ENCODE measurements at regions of chr16 and their contacts with region 1.

Region 1: DNA sequence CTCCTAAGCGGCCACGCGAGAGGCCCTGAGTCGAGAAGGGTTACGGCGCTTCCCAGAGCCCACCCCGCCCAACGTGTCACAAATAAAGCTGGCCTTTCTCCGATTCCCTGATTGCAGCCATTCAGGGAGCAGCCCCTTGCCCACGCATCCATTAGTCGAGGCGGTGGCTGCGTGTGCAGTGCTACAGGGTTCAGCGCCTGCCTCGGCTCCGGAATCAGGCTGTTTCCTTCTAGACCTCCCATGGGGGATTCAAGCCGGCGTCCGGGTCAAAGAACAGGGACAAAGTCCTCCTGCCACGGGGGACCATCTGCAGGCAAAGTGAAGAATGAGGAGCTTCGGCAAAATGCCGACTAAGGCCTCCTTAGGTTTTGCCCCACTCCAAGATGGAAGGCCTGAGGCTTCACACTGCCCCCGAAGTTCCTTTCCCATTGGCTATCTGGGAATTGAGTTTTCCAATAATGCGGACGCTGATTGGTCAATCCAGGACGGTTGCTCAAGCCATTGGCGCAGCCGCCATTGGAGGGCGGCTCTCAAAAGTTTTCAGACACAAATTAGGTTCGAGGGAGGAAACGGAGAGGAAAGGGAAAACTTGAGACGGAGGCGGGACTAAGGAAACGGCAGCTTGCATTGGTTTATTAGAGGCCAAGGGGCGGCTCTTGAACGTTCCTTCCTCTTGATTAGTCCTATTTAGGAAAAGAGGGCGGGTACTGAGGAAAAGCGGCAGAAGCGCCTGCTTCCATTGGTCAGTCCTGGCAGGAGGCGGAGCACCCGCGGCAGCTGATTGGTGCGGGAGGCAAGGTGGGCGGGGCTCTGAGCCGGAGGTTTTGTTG is 430 bp upstream of the KATNB1 start:
- DNase-seq: peak; percentile 88 to 100 (median 98)
- ATAC-seq: peak; percentile 96
- H3K4me3 ChIP-seq: peak overlapping the region; percentile 93
- H3K4me3 Mint-ChIP-seq: peak overlapping the region; percentile 90 to 99 (median 96)
- H3K27ac ChIP-seq: peak overlapping the region; percentile 80
- H3K27ac Mint-ChIP-seq: peak overlapping the region; percentile 81 to 98 (median 93)
- H3K4me1 ChIP-seq: peaks cover 12 to 14% of the 10 kb centered on the region in 2 donors
- H3K4me1 Mint-ChIP-seq: peaks cover 14 to 38% (median 26%) of the 10 kb centered on the region in 7 donors
- H3K27me3 ChIP-seq: no peaks in the 10 kb centered on the region
- H3K27me3 Mint-ChIP-seq: no peaks in the 10 kb centered on the region

Region 2: GRCh38 chr16:56425439-56425832 is 1309.7 kb before region 1 on chr16 and contains the start of gene AMFR:
- CTCF ChIA-PET with region 1: interaction called, 5 read pairs
- POLR2A ChIA-PET with region 1: no interaction called
- intact Hi-C with region 1: loop called in 1 of 2 experiments (anchors 10 kb)
- DNase-seq: peak; percentile 57 to 86 (median 68)
- ATAC-seq: peak; percentile 97
- H3K4me3 ChIP-seq: peak within 1 kb of the TSS; percentile 73
- H3K4me3 Mint-ChIP-seq: peak within 1 kb of the TSS; percentile 95 to 100 (median 98)
- H3K27ac ChIP-seq: peak within 1 kb of the TSS; percentile 82
- H3K27ac Mint-ChIP-seq: peak within 1 kb of the TSS; percentile 74 to 96 (median 94)
- H3K4me1 ChIP-seq: peaks cover 6 to 8% of the 10 kb centered on the region in 2 donors
- H3K4me1 Mint-ChIP-seq: peaks cover 32 to 45% (median 40%) of the 10 kb centered on the region in 7 donors
- H3K27me3 ChIP-seq: no peaks in the 10 kb centered on the region
- H3K27me3 Mint-ChIP-seq: no peaks in the 10 kb centered on the region
- total RNA-seq, gene AMFR: 45.5 to 83.3 (median 62.0) TPM

Region 3: GRCh38 chr16:56931892-56932720 is 803.0 kb before region 1 on chr16 and contains the start of gene HERPUD1:
- CTCF ChIA-PET with region 1: no interaction called
- POLR2A ChIA-PET with region 1: no interaction called
- intact Hi-C with region 1: loop called in 1 of 2 experiments (anchors 5 kb)
- DNase-seq: peak; percentile 96 to 99 (median 99)
- ATAC-seq: peak; percentile 96
- H3K4me3 ChIP-seq: peak within 1 kb of the TSS; percentile 94
- H3K4me3 Mint-ChIP-seq: peak within 1 kb of the TSS; percentile 97 to 99 (median 98)
- H3K27ac ChIP-seq: peak within 1 kb of the TSS; percentile 98
- H3K27ac Mint-ChIP-seq: peak within 1 kb of the TSS; percentile 96 to 99 (median 97)
- H3K4me1 ChIP-seq: peaks cover 13 to 18% of the 10 kb centered on the region in 2 donors
- H3K4me1 Mint-ChIP-seq: peaks cover 18 to 52% (median 38%) of the 10 kb centered on the region in 7 donors
- H3K27me3 ChIP-seq: no peaks in the 10 kb centered on the region
- H3K27me3 Mint-ChIP-seq: no peaks in the 10 kb centered on the region
- total RNA-seq, gene HERPUD1: 102 to 226 (median 131) TPM

Region 4: DNA sequence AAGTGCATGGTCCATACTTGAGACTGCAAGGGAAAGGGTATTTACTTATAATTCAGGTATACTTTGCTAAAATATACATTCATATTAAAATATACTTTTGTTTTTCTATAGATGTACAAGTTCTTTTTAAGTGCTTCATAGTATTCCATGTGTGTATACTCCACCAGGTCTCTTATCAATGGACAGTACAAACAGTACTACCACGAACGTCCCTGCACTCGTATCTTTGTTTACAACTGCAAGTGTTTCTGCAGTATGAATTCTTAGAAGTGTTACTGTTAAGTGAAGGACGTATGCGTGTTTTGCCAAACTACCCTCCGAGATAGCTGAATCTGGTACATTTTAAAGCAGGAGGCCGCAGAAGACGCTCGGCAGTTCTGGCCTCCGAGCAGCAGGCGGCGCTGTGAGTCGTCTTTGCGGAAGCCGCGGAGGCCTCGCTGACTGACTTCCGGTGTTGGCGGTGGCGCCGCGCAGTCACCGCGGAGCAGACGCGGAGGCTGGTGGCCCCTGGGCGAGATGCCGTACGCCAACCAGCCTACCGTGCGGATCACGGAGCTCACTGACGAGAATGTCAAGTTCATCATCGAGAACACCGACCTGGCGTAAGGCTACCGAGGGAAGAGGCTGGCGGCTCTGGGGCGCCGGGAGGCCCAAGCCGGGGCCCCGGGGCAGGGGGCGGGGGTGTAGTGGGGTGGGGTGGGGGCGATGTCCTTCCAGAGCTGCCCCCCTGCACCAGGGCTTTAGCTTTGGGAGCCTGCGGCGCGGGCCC is 272.7 kb before region 1 on chr16 and contains the start of gene POLR2C:
- CTCF ChIA-PET with region 1: no interaction called
- POLR2A ChIA-PET with region 1: no interaction called
- intact Hi-C with region 1: loop called in 1 of 2 experiments (anchors 1 kb)
- DNase-seq: peak; percentile 84 to 96 (median 92)
- ATAC-seq: peak; percentile 99
- H3K4me3 ChIP-seq: peak within 1 kb of the TSS; percentile 86
- H3K4me3 Mint-ChIP-seq: peak within 1 kb of the TSS; percentile 79 to 100 (median 98)
- H3K27ac ChIP-seq: peak within 1 kb of the TSS; percentile 77
- H3K27ac Mint-ChIP-seq: peak within 1 kb of the TSS; percentile 93 to 100 (median 99)
- H3K4me1 ChIP-seq: peaks cover 17 to 23% of the 10 kb centered on the region in 2 donors
- H3K4me1 Mint-ChIP-seq: peaks cover 19 to 45% (median 35%) of the 10 kb centered on the region in 7 donors
- H3K27me3 ChIP-seq: no peaks in the 10 kb centered on the region
- H3K27me3 Mint-ChIP-seq: no peaks in the 10 kb centered on the region
- total RNA-seq, gene POLR2C: 63.4 to 96.3 (median 81.4) TPM

Region 5: DNA sequence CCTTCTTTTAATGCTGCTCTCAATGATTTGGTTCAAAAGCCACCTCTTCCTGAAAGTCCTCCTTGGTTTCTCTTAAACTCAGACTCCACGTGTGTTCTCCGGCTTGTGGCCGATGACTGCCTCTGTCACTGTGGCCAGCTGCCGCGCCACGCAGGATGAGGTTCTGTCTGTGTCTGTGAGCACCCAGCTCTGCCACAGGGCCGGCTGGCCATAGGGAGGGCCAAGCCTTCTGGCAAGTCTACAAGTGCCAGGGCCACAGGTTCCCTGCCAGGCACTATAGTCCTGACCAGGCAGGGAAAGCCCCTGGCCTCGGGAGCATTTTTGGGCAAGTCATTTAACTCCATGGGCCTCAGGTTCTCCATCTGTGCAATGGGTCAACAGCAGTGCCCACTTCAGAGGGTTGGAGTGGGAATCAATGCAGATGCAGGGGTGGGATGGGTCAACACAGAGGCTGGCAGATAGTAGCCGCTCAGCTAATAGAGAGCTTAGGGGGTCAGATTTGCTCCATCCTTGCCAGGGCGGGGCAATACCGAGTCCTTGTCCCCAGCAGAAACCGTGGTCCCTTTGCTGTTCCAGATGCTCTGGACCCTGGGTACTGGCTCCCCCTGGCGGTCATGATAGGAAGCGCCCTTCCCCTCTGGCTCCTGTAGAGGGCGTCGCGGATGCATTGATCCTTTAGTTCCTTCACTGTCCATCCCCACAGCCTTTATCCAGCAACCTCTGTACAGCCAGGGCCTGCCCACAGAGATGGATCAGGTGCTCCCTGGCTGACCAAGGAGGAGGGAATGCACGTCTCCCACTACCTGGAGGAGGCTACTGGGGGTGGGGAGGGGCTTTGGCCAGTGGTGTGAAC is 86.3 kb before region 1 on chr16:
- CTCF ChIA-PET with region 1: interaction called, 4 read pairs
- POLR2A ChIA-PET with region 1: interaction called, 4 read pairs
- intact Hi-C with region 1: loop called (anchors 1 to 5 kb)
- DNase-seq: peak; percentile 63 to 90 (median 80)
- ATAC-seq: peak; percentile 90
- H3K4me3 ChIP-seq: no peak overlapping the region
- H3K4me3 Mint-ChIP-seq: peak overlapping the region in 2 of 10 donors; percentile 7 to 77
- H3K27ac ChIP-seq: no peak overlapping the region
- H3K27ac Mint-ChIP-seq: peak overlapping the region in 5 of 9 donors; percentile 11 to 66 (median 59)
- H3K4me1 ChIP-seq: peaks cover 0 to 29% of the 10 kb centered on the region in 2 donors
- H3K4me1 Mint-ChIP-seq: peaks cover 6 to 33% (median 15%) of the 10 kb centered on the region in 7 donors
- H3K27me3 ChIP-seq: no peaks in the 10 kb centered on the region
- H3K27me3 Mint-ChIP-seq: no peaks in the 10 kb centered on the region

Region 6: DNA sequence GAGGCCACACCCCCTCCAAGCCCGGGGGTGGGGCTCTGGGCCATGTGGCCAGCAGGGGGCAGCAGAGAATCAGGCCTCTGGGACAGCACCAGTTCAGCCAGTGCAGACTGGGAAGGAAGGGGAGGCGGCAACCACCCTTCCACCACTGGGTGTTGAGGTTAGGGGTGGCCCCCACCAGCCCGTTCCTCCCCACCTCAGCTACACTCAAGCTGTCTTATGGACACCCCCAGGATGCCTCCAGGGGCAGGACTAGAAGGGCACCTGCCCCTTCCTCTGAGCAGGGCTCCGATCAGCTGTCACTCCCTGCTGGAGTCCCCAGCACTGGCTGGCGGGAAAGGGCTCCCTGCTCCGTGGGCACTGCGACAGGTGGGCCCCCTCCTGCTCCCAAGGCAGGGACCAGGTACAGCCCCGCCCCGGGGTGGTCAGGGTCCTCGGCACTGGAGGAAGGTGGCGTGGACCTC is 22.2 kb after region 1 on chr16:
- CTCF ChIA-PET with region 1: interaction called, 5 read pairs
- POLR2A ChIA-PET with region 1: interaction called, 6 read pairs
- intact Hi-C with region 1: loop called (anchors 1 kb)
- DNase-seq: peak; percentile 61 to 93 (median 81)
- ATAC-seq: peak; percentile 93
- H3K4me3 ChIP-seq: no peak overlapping the region
- H3K4me3 Mint-ChIP-seq: no peak overlapping the region
- H3K27ac ChIP-seq: no peak overlapping the region
- H3K27ac Mint-ChIP-seq: no peak overlapping the region
- H3K4me1 ChIP-seq: peaks cover 0 to 5% of the 10 kb centered on the region in 2 donors
- H3K4me1 Mint-ChIP-seq: peaks cover 0 to 3% (median 0%) of the 10 kb centered on the region in 7 donors
- H3K27me3 ChIP-seq: no peaks in the 10 kb centered on the region
- H3K27me3 Mint-ChIP-seq: no peaks in the 10 kb centered on the region

Region 7: GRCh38 chr16:58129097-58129936 is 394.2 kb after region 1 on chr16 and contains the start of gene CFAP20:
- CTCF ChIA-PET with region 1: no interaction called
- POLR2A ChIA-PET with region 1: interaction called, 6 read pairs
- intact Hi-C with region 1: loop called (anchors 1 kb)
- DNase-seq: peak; percentile 87 to 99 (median 97)
- ATAC-seq: peak; percentile 94
- H3K4me3 ChIP-seq: peak within 1 kb of the TSS; percentile 99
- H3K4me3 Mint-ChIP-seq: peak within 1 kb of the TSS; percentile 89 to 96 (median 92)
- H3K27ac ChIP-seq: peak within 1 kb of the TSS; percentile 90
- H3K27ac Mint-ChIP-seq: peak within 1 kb of the TSS; percentile 80 to 98 (median 94)
- H3K4me1 ChIP-seq: peaks cover 17 to 29% of the 10 kb centered on the region in 2 donors
- H3K4me1 Mint-ChIP-seq: peaks cover 30 to 47% (median 45%) of the 10 kb centered on the region in 7 donors
- H3K27me3 ChIP-seq: no peaks in the 10 kb centered on the region
- H3K27me3 Mint-ChIP-seq: no peaks in the 10 kb centered on the region
- total RNA-seq, gene CFAP20: 28.2 to 165 (median 40.7) TPM

Measured in naive thymus-derived CD4-positive, alpha-beta T cell (primary cell).